Activated CD4-positive, alpha-beta memory T cell treated with anti-CD3 and anti-CD28 coated beads for 36 hours (primary cell): ENCODE measurements at regions of chrX and their contacts with region 1.

Region 1: GRCh38 chrX:40871385-40872082 is 136.2 kb upstream of the MED14 start:
- DNase-seq: peak; percentile 46
- H3K4me3 Mint-ChIP-seq: no peak overlapping the region
- H3K27ac Mint-ChIP-seq: peak overlapping the region; percentile 70
- H3K4me1 Mint-ChIP-seq: peaks cover 11% of the 10 kb centered on the region
- H3K27me3 Mint-ChIP-seq: no peaks in the 10 kb centered on the region

Region 2: GRCh38 chrX:40700640-40701342 is 170.7 kb before region 1 on chrX:
- CTCF ChIA-PET with region 1: no interaction called
- POLR2A ChIA-PET with region 1: no interaction called
- intact Hi-C with region 1: no loop called
- DNase-seq: no peak
- H3K4me3 Mint-ChIP-seq: no peak overlapping the region
- H3K27ac Mint-ChIP-seq: no peak overlapping the region
- H3K4me1 Mint-ChIP-seq: no peaks in the 10 kb centered on the region
- H3K27me3 Mint-ChIP-seq: no peaks in the 10 kb centered on the region

Region 3: GRCh38 chrX:40832723-40833122 is 38.8 kb before region 1 on chrX:
- CTCF ChIA-PET with region 1: no interaction called
- POLR2A ChIA-PET with region 1: no interaction called
- intact Hi-C with region 1: no loop called
- DNase-seq: no peak
- H3K4me3 Mint-ChIP-seq: no peak overlapping the region
- H3K27ac Mint-ChIP-seq: no peak overlapping the region
- H3K4me1 Mint-ChIP-seq: no peaks in the 10 kb centered on the region
- H3K27me3 Mint-ChIP-seq: no peaks in the 10 kb centered on the region

Region 4: DNA sequence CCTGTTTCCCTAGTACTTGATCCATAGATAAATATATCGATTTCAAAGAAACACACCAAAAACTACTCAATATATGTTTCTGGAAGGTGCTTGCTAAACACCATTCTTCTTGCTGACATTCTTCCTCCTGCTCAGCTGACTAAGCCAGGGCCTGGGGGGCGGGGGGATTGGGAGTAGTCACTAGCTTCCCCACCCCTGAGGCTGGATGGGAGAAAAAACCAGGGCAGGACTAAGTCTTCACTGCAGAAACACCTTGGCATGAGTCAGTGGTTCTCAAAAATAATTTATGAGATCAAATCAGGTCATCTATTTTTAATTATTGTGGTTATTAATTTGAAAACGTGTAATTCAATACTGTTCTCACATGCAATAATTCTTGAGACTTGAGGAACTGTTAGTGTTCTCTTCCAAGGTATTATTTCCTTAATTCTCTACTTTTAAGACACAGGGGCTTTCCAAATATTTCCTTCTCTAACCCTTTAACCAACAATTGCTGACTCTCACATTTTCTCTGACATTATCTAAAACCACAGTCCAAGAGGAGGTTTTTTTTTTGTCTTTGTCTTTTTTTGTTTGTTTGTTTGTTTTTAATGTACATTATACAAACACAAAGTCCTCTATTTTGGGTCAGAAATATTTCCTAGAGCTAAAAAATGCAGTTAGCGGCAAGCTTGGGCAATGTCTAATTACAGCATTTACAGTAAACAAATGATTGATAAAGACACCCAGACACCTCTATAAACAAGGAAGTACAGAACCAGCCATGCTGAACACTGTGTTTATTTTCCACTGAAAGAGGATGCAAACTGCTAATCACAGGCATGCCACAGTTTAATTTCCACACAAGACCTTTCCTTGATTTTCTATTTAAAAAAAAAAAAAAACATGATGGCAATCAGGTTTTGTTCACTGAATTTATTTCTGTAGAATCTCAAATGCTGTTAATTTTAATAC is 93.4 kb after region 1 on chrX:
- CTCF ChIA-PET with region 1: no interaction called
- POLR2A ChIA-PET with region 1: no interaction called
- intact Hi-C with region 1: no loop called
- DNase-seq: no peak
- H3K4me3 Mint-ChIP-seq: no peak overlapping the region
- H3K27ac Mint-ChIP-seq: no peak overlapping the region
- H3K4me1 Mint-ChIP-seq: no peaks in the 10 kb centered on the region
- H3K27me3 Mint-ChIP-seq: no peaks in the 10 kb centered on the region

Region 5: DNA sequence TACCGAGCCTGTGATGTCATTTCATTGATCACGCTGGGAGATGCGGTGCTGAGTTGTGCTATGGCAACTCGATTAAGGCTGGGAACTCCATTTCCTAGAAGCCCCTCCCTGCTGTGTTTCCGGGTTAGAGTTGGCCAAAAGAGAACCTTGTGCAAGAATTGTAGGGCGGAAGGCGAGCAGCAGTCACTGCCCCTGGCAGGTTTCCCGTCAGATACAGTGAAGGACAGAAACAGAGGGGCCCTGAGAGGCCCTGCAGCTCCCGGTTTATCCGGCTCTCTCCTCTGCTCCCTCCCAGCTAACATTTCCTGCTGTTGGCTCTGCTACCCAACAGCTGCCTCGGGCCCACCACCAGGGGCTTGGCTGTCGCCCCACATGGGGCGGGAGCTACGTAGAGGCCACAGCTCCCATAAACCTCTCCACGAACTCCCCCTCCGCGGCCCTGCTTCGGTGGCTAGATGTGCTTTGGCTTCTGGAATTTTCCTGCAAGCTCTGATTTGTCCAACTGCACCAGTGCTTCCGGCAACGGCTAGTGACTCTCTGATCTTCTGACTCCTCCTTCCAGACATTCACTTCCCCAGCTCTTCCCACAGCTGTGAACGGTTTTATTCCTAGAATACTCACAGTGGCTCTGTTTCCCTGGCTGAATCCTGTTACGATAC is 138.8 kb after region 1 on chrX:
- CTCF ChIA-PET with region 1: interaction called, 3 read pairs
- POLR2A ChIA-PET with region 1: interaction called, 3 read pairs
- intact Hi-C with region 1: loop called (anchors 5 kb)
- DNase-seq: peak; percentile 74
- H3K4me3 Mint-ChIP-seq: peak overlapping the region; percentile 52
- H3K27ac Mint-ChIP-seq: peak overlapping the region; percentile 45
- H3K4me1 Mint-ChIP-seq: peaks cover 20% of the 10 kb centered on the region
- H3K27me3 Mint-ChIP-seq: no peaks in the 10 kb centered on the region